Activated B cell treated with CpG ODN at 0.5 μM for 24 hours (primary cell): ENCODE measurements at regions of chr13 and their contacts with region 1.

Region 1: DNA sequence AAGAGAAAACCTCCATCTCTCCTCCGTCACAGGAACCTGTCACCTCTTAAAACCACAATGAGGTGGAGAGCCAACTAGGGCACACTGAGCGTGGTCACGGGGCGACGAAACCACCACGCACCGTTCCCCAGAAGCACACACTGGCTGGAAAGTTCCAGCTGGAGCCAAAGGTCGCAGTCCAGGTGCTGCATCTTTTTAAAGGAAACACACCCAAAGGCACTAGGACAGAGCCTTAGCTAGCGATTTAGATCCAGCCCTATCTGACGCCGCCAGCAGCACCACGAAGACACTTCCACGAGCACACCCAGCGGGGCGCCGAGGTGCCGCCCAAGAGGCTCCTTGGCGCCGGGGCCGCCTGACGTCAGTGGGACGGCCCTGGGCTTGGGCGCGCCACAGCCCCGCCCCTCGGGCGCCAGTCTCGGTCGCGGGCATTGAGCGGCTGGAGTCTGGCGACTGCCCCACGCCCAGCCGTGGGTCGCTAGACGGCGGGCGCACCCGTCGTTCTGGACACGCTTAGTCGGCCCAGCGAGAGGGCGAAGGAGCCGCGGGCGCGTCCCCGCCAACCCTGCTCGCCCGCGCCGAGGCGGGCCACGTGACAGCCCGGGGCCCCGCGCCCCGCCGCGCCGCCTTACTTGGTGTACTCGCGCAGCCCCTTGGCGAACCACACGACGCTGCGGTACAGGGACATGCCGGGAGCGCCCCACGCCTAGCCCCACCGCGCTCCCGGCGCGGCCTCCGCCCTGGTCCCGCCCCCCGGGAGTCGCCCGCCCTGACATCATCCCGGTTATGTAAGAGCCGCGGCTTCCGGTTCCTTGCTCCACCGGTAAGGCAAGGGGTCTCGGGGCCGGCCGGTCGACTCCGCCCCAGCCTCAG is at the start of gene DHRS12:
- DNase-seq: peak; percentile 84
- ATAC-seq: peak; percentile 81
- H3K4me3 Mint-ChIP-seq: peak within 1 kb of the TSS; percentile 92
- H3K27ac Mint-ChIP-seq: peak within 1 kb of the TSS; percentile 99
- H3K4me1 Mint-ChIP-seq: peaks cover 47% of the 10 kb centered on the region
- H3K27me3 Mint-ChIP-seq: no peaks in the 10 kb centered on the region
- CTCF ChIP-seq: no peak
- total RNA-seq, gene DHRS12: 11.6 and 14.1 TPM in 2 replicates

Region 2: DNA sequence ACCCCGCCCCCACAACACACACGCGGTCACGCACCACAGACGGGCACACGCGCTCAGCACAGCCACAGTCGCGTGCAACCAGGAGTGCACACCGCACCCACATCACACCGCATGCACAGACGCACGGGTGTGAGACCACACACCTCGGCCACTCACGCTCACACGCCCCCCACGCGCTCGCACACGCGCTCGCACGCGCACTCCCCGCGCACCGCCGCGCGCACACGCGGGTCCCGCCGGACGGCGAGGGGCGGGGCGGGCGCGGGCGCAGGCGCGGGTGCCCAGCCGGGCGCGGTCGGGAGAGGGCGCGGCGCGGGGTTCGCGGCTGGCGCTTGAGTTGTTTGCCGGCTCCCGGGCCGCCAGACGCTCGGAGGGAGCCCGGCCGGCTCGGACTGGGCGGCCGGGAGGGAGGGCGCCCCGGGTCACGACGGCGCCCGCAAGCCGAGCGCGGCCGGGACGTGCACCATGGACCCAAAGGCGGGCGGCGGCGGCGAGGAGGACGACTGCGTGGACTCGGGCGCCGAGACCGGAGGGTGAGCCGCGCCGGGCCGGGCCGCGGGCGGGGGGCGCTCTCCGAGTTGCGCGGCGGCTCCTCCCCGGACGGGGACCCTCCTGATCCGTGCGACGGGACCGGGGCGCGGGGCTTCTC is 581.5 kb before region 1 on chr13 and contains the start of gene FAM124A:
- CTCF ChIA-PET with region 1: no interaction called
- POLR2A ChIA-PET with region 1: no interaction called
- intact Hi-C with region 1: loop called (anchors 5 kb)
- DNase-seq: peak; percentile 51
- ATAC-seq: peak; percentile 90
- H3K4me3 Mint-ChIP-seq: peak within 1 kb of the TSS; percentile 81
- H3K27ac Mint-ChIP-seq: no peak within 1 kb of the TSS
- H3K4me1 Mint-ChIP-seq: peaks cover 7% of the 10 kb centered on the region
- H3K27me3 Mint-ChIP-seq: peaks cover 49% of the 10 kb centered on the region
- CTCF ChIP-seq: no peak
- total RNA-seq, gene FAM124A: 0.07 TPM in 1 of 2 replicates, not detected in the other

Region 3: DNA sequence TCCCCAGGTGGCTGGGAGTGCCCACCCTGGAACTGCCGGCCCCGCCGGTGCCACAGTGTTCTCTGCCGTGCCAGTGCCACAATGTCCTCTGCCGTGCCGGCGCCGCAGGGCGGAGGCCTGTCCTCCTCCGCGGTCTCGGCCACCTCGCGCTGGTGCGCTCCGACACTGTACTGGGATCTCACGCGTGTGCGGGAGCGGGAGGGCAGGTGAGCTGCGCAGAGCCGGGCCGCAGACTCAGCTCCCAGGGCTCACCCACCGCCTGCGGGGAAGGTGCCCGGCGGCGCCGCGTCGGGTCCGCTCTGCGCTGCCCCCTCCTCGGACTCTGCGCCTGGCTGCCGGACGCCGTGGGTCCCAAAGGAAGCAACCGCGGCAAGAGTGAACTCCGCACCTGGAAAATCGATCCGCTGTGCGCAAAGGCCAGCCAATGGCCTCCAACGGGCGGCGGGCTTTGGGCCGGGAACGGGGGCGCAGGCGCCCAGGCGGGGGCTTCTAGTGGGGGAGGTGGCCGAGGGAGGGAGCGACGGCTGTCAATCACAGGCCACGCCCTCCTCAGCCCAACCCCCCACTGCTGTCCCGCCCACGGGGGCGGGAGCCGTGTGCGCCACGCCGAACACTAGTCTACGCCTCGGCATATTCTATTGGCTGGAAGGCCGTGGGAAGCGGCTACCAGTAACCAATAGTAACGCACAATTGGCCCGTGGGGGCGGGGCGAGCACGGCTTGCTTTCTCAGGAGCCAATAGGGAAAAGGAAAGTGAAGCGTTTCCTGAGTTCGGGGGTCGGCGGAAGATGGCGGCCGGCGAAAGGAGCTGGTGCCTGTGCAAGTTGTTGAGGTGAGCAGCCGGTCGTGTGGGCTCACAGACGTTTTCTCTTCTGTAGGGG is 208.2 kb after region 1 on chr13 and contains the start of gene ALG11:
- CTCF ChIA-PET with region 1: no interaction called
- POLR2A ChIA-PET with region 1: no interaction called
- intact Hi-C with region 1: loop called (anchors 1 kb)
- DNase-seq: peak; percentile 98
- ATAC-seq: peak; percentile 99
- H3K4me3 Mint-ChIP-seq: peak within 1 kb of the TSS; percentile 99
- H3K27ac Mint-ChIP-seq: peak within 1 kb of the TSS; percentile 89
- H3K4me1 Mint-ChIP-seq: peaks cover 19% of the 10 kb centered on the region
- H3K27me3 Mint-ChIP-seq: peaks cover 16% of the 10 kb centered on the region
- CTCF ChIP-seq: no peak
- total RNA-seq, gene ALG11: 31.8 and 36.9 TPM in 2 replicates

Region 4: DNA sequence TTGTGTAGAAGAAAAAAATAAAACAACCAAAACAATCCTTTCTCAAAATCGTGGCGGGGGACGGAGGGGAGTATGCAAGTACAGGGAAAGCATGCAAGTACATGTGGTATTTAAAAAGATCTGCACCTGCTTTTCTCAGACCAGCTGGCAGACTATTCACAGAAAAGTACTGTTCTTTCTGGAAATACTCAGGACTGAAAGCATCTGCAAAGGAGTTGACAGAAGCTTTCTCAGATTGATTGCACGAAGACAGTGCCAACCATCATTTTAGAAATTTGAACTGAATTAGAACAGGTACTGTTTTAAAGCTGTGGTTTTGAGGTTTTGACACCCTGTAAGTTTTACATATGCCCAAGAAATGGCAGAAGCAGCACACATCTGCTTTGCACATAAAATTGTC is 1064.5 kb after region 1 on chr13:
- CTCF ChIA-PET with region 1: no interaction called
- POLR2A ChIA-PET with region 1: no interaction called
- intact Hi-C with region 1: no loop called
- DNase-seq: no peak
- ATAC-seq: no peak
- H3K4me3 Mint-ChIP-seq: no peak overlapping the region
- H3K27ac Mint-ChIP-seq: no peak overlapping the region
- H3K4me1 Mint-ChIP-seq: no peaks in the 10 kb centered on the region
- H3K27me3 Mint-ChIP-seq: no peaks in the 10 kb centered on the region
- CTCF ChIP-seq: no peak

Region 5: GRCh38 chr13:53513226-53513625 is 1709.6 kb after region 1 on chr13:
- CTCF ChIA-PET with region 1: no interaction called
- POLR2A ChIA-PET with region 1: no interaction called
- intact Hi-C with region 1: no loop called
- DNase-seq: no peak
- ATAC-seq: no peak
- H3K4me3 Mint-ChIP-seq: no peak overlapping the region
- H3K27ac Mint-ChIP-seq: no peak overlapping the region
- H3K4me1 Mint-ChIP-seq: no peaks in the 10 kb centered on the region
- H3K27me3 Mint-ChIP-seq: no peaks in the 10 kb centered on the region
- CTCF ChIP-seq: no peak